GM12878 (cell line): ENCODE measurements at regions of chr2 and their contacts with region 1.

Region 1: GRCh38 chr2:60707750-60708371 is 48.2 kb upstream of the PAPOLG start:
- DNase-seq: peak; percentile 2
- ATAC-seq: peak; percentile 75
- H3K4me3 ChIP-seq: no peak overlapping the region
- H3K27ac ChIP-seq: no peak overlapping the region
- H3K4me1 ChIP-seq: no peaks in the 10 kb centered on the region
- H3K27me3 ChIP-seq: no peaks in the 10 kb centered on the region; a peak in 1 of 4 replicates
- CTCF ChIP-seq: peak; percentile 50 to 70 (median 67)
- EP300 ChIP-seq: no peak
- POLR2A ChIP-seq: no peak
- RAD21 ChIP-seq: peak; percentile 74

Region 2: DNA sequence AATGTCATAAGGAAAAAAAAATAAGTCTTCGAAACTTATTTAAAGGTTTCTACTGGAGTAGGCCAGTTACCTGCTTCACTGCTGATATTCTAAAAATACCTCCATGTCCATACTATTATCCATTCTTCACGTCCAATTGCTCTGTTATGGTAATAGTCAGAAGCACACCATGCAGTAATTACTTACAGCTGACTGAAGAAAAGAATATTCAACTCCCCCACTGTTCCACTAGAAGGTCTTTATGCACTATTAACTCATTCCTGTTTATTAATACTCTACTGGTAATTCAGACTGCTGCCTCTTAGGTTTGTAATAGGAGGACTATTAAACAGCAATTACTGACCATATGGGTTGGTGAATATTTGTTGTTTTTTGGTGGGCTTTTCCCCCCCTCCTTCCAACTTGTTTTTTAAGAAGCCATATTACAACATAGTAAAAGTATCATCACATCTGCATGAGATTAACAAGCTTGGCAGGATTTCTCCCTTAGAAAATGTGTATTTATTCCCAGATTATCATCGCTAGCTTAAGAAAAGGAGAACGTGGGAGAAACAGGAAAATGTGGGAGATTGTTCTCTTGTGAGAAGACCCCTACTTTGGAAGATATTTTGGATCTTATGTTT is 1660.4 kb before region 1 on chr2:
- CTCF ChIA-PET with region 1: no interaction called
- POLR2A ChIA-PET with region 1: no interaction called
- RAD21 ChIA-PET with region 1: no interaction called
- SMC1A ChIA-PET with region 1: no interaction called
- in situ Hi-C with region 1: no loop called
- intact Hi-C with region 1: no loop called
- DNase-seq: no peak
- ATAC-seq: no peak
- H3K4me3 ChIP-seq: no peak overlapping the region
- H3K27ac ChIP-seq: no peak overlapping the region
- H3K4me1 ChIP-seq: no peaks in the 10 kb centered on the region
- H3K27me3 ChIP-seq: no peaks in the 10 kb centered on the region
- CTCF ChIP-seq: no peak
- EP300 ChIP-seq: no peak
- POLR2A ChIP-seq: no peak
- RAD21 ChIP-seq: no peak

Region 3: GRCh38 chr2:59920961-59921360 is 786.9 kb before region 1 on chr2:
- CTCF ChIA-PET with region 1: no interaction called
- POLR2A ChIA-PET with region 1: no interaction called
- RAD21 ChIA-PET with region 1: no interaction called
- SMC1A ChIA-PET with region 1: no interaction called
- in situ Hi-C with region 1: no loop called
- intact Hi-C with region 1: no loop called
- DNase-seq: no peak
- ATAC-seq: no peak
- H3K4me3 ChIP-seq: no peak overlapping the region
- H3K27ac ChIP-seq: no peak overlapping the region
- H3K4me1 ChIP-seq: no peaks in the 10 kb centered on the region
- H3K27me3 ChIP-seq: no peaks in the 10 kb centered on the region; a peak in 1 of 4 replicates
- CTCF ChIP-seq: no peak
- EP300 ChIP-seq: no peak
- POLR2A ChIP-seq: no peak
- RAD21 ChIP-seq: no peak

Region 4: DNA sequence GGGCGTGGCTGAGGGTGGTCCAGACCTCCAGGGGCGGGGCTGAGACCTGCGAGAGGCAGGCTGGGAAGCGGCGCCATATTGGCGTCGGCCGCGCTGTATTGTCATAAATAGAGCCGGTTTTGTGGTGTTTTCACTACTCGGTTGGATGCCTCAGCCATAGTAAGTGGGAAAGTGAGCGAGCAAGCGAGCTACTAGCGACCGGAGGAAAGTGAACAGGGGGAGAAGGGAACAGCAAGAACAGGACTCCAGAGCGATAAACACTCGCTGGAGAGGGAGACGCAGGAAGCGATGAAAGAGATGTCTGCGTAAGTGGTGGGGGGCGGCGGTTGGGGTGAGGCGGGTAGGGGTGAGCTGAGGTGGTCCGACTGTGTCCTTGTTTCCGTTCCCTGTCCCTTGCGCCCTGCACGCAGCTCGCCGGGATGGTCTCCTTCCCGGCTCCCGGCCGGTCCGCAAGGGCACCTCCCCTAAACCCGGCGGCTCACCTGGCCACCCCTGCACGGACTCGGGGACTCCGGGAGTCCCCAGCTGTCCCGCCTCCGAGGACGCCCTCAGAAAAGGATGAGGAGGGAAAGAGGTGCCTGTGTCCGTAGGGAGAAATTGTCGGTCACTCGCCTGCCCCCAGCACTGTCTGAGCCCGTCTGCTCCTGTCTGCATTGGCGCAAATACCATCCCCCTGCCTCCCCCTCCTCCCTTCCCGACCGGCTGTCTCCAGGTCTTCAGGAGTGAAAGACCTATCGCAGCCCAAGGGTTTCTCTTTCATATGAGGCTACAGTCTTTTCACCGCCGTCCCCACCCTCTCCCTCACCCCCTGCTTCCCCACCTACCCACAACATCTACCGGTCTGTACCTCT is 48.6 kb after region 1 on chr2 and contains the start of gene PAPOLG:
- CTCF ChIA-PET with region 1: interaction called, 15 read pairs
- POLR2A ChIA-PET with region 1: interaction called, 3 read pairs
- RAD21 ChIA-PET with region 1: interaction called, 6 read pairs
- SMC1A ChIA-PET with region 1: interaction called, 6 read pairs
- in situ Hi-C with region 1: no loop called
- intact Hi-C with region 1: no loop called
- DNase-seq: peak; percentile 61
- ATAC-seq: peak; percentile 98
- H3K4me3 ChIP-seq: peak within 1 kb of the TSS; percentile 96
- H3K27ac ChIP-seq: peak within 1 kb of the TSS; percentile 77
- H3K4me1 ChIP-seq: no peaks in the 10 kb centered on the region
- H3K27me3 ChIP-seq: no peaks in the 10 kb centered on the region
- CTCF ChIP-seq: no peak
- EP300 ChIP-seq: no peak
- POLR2A ChIP-seq: peak; percentile 84
- RAD21 ChIP-seq: no peak
- polyA plus RNA-seq, gene PAPOLG: 4.2 TPM

Region 5: DNA sequence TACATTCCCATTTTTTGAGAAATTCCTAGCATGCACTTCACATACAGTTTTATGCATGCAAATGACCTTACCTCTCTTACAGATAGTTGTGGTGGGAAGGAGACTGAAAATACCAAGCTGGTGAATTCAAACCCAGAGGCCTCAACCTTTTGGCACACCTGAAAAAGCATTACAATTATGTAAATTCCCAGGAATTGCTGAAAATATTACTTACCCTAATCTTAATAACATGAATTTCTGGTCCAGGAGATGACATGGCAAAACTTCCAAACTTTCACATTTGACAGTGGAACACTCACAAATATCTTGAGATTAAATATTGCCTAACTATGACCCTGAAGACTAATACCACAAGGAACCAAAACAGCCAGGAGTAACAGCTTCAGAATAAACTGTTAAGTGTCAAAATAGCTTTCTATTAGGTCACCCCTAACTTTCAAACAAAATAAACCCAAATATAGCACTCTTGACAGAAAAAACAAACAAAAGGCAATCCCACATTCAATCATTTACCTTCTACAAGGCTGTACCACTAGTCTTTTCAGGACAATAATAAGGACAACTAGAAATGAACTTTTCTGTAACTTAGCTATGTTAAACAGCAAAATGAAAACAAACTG is 298.7 kb after region 1 on chr2:
- CTCF ChIA-PET with region 1: interaction called, 111 read pairs
- POLR2A ChIA-PET with region 1: no interaction called
- RAD21 ChIA-PET with region 1: interaction called, 11 read pairs
- SMC1A ChIA-PET with region 1: interaction called, 96 read pairs
- in situ Hi-C with region 1: no loop called
- intact Hi-C with region 1: no loop called
- DNase-seq: no peak
- ATAC-seq: no peak
- H3K4me3 ChIP-seq: no peak overlapping the region
- H3K27ac ChIP-seq: no peak overlapping the region
- H3K4me1 ChIP-seq: no peaks in the 10 kb centered on the region
- H3K27me3 ChIP-seq: no peaks in the 10 kb centered on the region
- CTCF ChIP-seq: no peak
- EP300 ChIP-seq: no peak
- POLR2A ChIP-seq: no peak
- RAD21 ChIP-seq: no peak

Region 6: GRCh38 chr2:61065715-61066709 is 358.2 kb after region 1 on chr2 and contains the start of gene SANBR:
- CTCF ChIA-PET with region 1: no interaction called
- POLR2A ChIA-PET with region 1: no interaction called
- RAD21 ChIA-PET with region 1: no interaction called
- SMC1A ChIA-PET with region 1: no interaction called
- in situ Hi-C with region 1: no loop called
- intact Hi-C with region 1: no loop called
- DNase-seq: peak; percentile 34
- ATAC-seq: peak; percentile 99
- H3K4me3 ChIP-seq: peak within 1 kb of the TSS; percentile 88
- H3K27ac ChIP-seq: peak within 1 kb of the TSS; percentile 46
- H3K4me1 ChIP-seq: no peaks in the 10 kb centered on the region
- H3K27me3 ChIP-seq: no peaks in the 10 kb centered on the region
- CTCF ChIP-seq: no peak
- EP300 ChIP-seq: no peak
- POLR2A ChIP-seq: peak; percentile 81
- RAD21 ChIP-seq: no peak
- polyA plus RNA-seq, gene SANBR: 2.2 to 3.1 TPM